ENCODE measurements at regions of chr7 and their contacts with region 1.

Region 1: DNA sequence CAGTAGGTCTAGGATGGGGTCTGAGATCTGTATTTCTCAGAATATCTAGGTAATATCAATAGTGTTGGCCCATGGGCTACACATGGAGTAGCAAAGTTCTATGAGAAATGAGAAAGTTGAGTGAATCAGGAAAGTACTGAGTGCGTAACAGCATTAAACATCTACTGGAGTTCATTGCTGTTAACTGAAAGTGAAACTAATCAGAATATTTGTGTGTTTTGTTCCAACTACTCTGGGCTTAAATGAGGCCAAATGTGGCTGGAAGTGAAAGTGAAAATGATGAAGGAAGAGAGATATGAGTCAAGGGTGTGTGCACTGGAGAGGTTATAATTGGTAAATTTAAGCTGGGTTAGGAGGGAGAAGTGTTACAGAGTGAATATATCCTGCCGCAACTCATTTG is 46.5 kb downstream of the TMEM106B start:
- DNase-seq: peak in 1 of 2 donors; percentile 82
- ATAC-seq: peak; percentile 96 to 99 (median 97)
- H3K4me3 ChIP-seq: peak overlapping the region; percentile 19
- H3K4me3 Mint-ChIP-seq: no peak overlapping the region
- H3K27ac ChIP-seq: peak overlapping the region; percentile 81
- H3K27ac Mint-ChIP-seq: no peak overlapping the region
- H3K4me1 ChIP-seq: peaks cover 7% of the 10 kb centered on the region
- H3K4me1 Mint-ChIP-seq: no peaks in the 10 kb centered on the region
- H3K27me3 ChIP-seq: no peaks in the 10 kb centered on the region
- H3K27me3 Mint-ChIP-seq: no peaks in the 10 kb centered on the region
- CTCF ChIP-seq: no peak

Region 2: GRCh38 chr7:12303495-12303894 is 45.9 kb after region 1 on chr7:
- intact Hi-C with region 1: no loop called
- DNase-seq: no peak
- ATAC-seq: no peak
- H3K4me3 ChIP-seq: no peak overlapping the region
- H3K4me3 Mint-ChIP-seq: no peak overlapping the region
- H3K27ac ChIP-seq: no peak overlapping the region
- H3K27ac Mint-ChIP-seq: no peak overlapping the region
- H3K4me1 ChIP-seq: no peaks in the 10 kb centered on the region
- H3K4me1 Mint-ChIP-seq: no peaks in the 10 kb centered on the region
- H3K27me3 ChIP-seq: peaks cover 2% of the 10 kb centered on the region
- H3K27me3 Mint-ChIP-seq: peaks cover 0 to 4% of the 10 kb centered on the region in 2 donors
- CTCF ChIP-seq: no peak

Region 3: GRCh38 chr7:12458520-12459131 is 201.0 kb after region 1 on chr7:
- intact Hi-C with region 1: no loop called
- DNase-seq: peak in 1 of 2 donors; percentile 49
- ATAC-seq: peak in 1 of 3 donors; percentile 43
- H3K4me3 ChIP-seq: no peak overlapping the region
- H3K4me3 Mint-ChIP-seq: no peak overlapping the region
- H3K27ac ChIP-seq: no peak overlapping the region
- H3K27ac Mint-ChIP-seq: no peak overlapping the region
- H3K4me1 ChIP-seq: no peaks in the 10 kb centered on the region
- H3K4me1 Mint-ChIP-seq: no peaks in the 10 kb centered on the region
- H3K27me3 ChIP-seq: no peaks in the 10 kb centered on the region
- H3K27me3 Mint-ChIP-seq: peaks cover 0 to 2% of the 10 kb centered on the region in 2 donors
- CTCF ChIP-seq: peak; percentile 30

Region 4: GRCh38 chr7:12686894-12687717 is 429.5 kb after region 1 on chr7 and contains the start of gene ARL4A:
- intact Hi-C with region 1: loop called (anchors 1 kb)
- DNase-seq: peak; percentile 75 to 93
- ATAC-seq: peak; percentile 34 to 58 (median 43)
- H3K4me3 ChIP-seq: peak within 1 kb of the TSS; percentile 84
- H3K4me3 Mint-ChIP-seq: peak within 1 kb of the TSS; percentile 90
- H3K27ac ChIP-seq: peak within 1 kb of the TSS; percentile 97
- H3K27ac Mint-ChIP-seq: peak within 1 kb of the TSS; percentile 96 to 99
- H3K4me1 ChIP-seq: peaks cover 16% of the 10 kb centered on the region
- H3K4me1 Mint-ChIP-seq: peaks cover 17 to 28% of the 10 kb centered on the region in 2 donors
- H3K27me3 ChIP-seq: no peaks in the 10 kb centered on the region
- H3K27me3 Mint-ChIP-seq: no peaks in the 10 kb centered on the region
- CTCF ChIP-seq: peak; percentile 60
- total RNA-seq, gene ARL4A: 54.7 to 81.4 (median 55.5) TPM

Measured in natural killer cell (primary cell).